G401 (cell line): ENCODE measurements at regions of chr2 and their contacts with region 1.

Region 1: GRCh38 chr2:65390134-65390533 is 42.3 kb downstream of the SPRED2 start:
- DNase-seq: no peak

Region 2: DNA sequence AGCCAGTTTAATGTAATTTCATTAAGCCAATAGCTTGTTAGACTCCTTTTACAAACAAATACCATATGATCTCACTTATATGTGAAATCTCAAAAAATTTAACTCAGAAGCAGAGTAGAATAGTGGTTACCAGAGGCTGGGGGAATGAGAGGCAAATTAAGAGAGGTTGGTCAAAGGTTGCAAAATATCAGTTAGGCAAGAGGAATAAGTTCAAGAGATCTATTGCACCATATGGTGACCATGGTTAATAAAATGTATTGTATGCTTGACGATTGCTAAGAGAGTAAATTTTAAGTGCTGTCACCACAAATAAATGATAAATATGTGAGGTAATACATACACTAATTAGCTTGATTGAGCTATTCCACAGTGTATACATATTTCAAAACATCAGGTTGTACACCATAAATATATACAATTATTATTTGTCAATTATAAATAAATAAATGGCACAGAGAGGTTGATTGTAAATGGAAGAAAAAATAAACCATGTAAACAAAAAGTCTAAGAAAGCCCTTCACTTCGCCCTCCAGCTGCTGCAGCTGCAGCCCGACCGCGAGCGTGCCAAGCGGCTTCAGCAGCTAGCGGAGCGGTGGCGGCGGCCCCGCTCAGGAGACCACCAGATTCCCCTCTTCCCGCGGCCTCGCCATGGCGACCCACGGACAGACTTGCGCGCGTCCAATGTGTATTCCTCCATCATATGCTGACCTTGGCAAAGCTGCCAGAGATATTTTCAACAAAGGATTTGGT is 185.5 kb before region 1 on chr2:
- in situ Hi-C with region 1: no loop called
- DNase-seq: peak; percentile 4

Region 3: GRCh38 chr2:65329525-65329924 is 60.6 kb before region 1 on chr2:
- in situ Hi-C with region 1: loop called (anchors 5 kb)
- DNase-seq: peak; percentile 37

Region 4: GRCh38 chr2:65340898-65341681 is 49.0 kb before region 1 on chr2:
- in situ Hi-C with region 1: no loop called
- DNase-seq: no peak